ENCODE measurements at regions of chr1 and their contacts with region 1.

Region 1: DNA sequence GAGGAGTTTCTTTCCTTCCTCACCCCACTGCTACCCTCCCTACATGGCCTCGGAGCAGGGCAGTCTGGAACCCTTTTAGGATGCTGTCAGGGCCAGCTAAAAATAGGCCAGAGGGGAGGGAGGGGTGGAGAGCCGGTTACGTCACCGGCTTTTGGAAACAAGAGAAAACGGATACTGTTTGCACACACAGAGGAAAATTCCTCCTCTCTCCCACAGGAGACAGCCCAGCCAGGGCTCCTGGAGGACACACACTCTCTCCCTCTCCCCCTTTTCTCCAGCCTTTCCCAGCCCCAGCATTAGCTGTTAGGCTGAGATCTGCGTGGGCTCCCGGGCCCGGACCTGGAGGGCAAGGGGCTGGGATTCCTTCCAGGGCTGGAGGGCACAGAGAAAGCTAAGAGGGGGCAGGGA is 20.0 kb upstream of the ALDH4A1 start:
- DNase-seq: peak; percentile 97
- H3K4me3 ChIP-seq: peak overlapping the region; percentile 25 to 42 (median 30)
- H3K27ac ChIP-seq: peak overlapping the region; percentile 92 to 95 (median 93)
- H3K4me1 ChIP-seq: peaks cover 52 to 61% (median 56%) of the 10 kb centered on the region in 4 donors
- H3K27me3 ChIP-seq: no peaks in the 10 kb centered on the region
- CTCF ChIP-seq: peak in 1 of 3 experiments; percentile 32
- EP300 ChIP-seq: no peak
- POLR2A ChIP-seq: no peak

Region 2: DNA sequence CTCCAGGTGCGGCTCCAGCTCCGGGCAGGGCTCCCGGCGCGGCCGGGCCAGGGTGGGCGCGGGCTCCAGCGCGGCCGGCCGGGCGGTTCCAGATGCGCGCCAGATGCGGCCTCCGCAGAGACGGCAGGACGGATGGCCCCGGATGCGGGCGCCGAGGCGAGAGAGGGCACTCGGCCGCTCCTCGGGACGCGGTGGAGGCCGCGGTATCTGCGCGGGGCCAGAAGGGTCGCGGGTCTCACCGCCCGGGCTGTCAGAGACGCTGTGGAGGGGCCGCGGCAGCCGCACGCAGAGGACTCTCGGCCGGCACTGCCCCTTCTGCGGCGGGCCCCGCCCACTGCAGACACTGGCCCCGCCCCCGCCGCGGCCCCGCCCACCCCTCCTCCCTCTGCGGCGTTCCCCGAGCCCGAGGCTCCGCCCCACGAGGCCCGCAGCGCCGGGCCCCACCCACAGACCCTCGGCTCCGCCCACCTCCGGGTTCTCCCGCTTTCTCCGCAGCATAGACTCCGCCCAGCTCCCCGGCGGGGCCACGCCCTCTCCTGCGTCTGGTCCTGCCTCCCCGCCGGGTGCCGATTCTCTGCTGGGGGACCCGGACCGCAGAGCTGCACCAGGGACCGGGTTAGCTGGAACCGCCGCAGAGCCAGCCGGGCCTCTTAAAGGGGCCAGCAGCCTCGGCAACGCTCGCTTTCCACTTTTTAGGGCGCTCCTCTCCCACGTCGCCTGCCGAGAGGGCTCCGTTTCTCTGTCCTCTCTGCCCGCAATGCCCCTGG is 34.2 kb after region 1 on chr1 and contains the start of gene IFFO2:
- intact Hi-C with region 1: loop called (anchors 5 kb)
- DNase-seq: peak; percentile 99
- H3K4me3 ChIP-seq: peak within 1 kb of the TSS; percentile 79 to 93 (median 86)
- H3K27ac ChIP-seq: peak within 1 kb of the TSS; percentile 85 to 95 (median 94)
- H3K4me1 ChIP-seq: peaks cover 36 to 51% (median 49%) of the 10 kb centered on the region in 4 donors
- H3K27me3 ChIP-seq: no peaks in the 10 kb centered on the region
- CTCF ChIP-seq: no peak
- EP300 ChIP-seq: no peak
- POLR2A ChIP-seq: peak; percentile 77
- total RNA-seq, gene IFFO2: 9.6 to 40.3 (median 16.3) TPM

Region 3: GRCh38 chr1:19010995-19011844 is 88.9 kb after region 1 on chr1:
- intact Hi-C with region 1: no loop called
- DNase-seq: peak; percentile 94
- H3K4me3 ChIP-seq: peak overlapping the region in 3 of 4 donors; percentile 18 to 24 (median 22)
- H3K27ac ChIP-seq: peak overlapping the region; percentile 74 to 84 (median 84)
- H3K4me1 ChIP-seq: peaks cover 11 to 33% (median 29%) of the 10 kb centered on the region in 4 donors
- H3K27me3 ChIP-seq: no peaks in the 10 kb centered on the region
- CTCF ChIP-seq: no peak
- EP300 ChIP-seq: peak; percentile 26
- POLR2A ChIP-seq: no peak